Naive thymus-derived CD8-positive, alpha-beta T cell (primary cell): ENCODE measurements at regions of chr10 and their contacts with region 1.

Region 1: GRCh38 chr10:6348096-6348874 is 145.6 kb downstream of the PFKFB3 start:
- DNase-seq: peak; percentile 63 to 96 (median 87)
- ATAC-seq: peak; percentile 90 to 92
- H3K4me3 Mint-ChIP-seq: peak overlapping the region; percentile 68 to 87 (median 78)
- H3K27ac Mint-ChIP-seq: peak overlapping the region; percentile 79 to 99 (median 95)
- H3K4me1 Mint-ChIP-seq: peaks cover 39 to 80% (median 63%) of the 10 kb centered on the region in 4 donors
- H3K27me3 Mint-ChIP-seq: no peaks in the 10 kb centered on the region

Region 2: DNA sequence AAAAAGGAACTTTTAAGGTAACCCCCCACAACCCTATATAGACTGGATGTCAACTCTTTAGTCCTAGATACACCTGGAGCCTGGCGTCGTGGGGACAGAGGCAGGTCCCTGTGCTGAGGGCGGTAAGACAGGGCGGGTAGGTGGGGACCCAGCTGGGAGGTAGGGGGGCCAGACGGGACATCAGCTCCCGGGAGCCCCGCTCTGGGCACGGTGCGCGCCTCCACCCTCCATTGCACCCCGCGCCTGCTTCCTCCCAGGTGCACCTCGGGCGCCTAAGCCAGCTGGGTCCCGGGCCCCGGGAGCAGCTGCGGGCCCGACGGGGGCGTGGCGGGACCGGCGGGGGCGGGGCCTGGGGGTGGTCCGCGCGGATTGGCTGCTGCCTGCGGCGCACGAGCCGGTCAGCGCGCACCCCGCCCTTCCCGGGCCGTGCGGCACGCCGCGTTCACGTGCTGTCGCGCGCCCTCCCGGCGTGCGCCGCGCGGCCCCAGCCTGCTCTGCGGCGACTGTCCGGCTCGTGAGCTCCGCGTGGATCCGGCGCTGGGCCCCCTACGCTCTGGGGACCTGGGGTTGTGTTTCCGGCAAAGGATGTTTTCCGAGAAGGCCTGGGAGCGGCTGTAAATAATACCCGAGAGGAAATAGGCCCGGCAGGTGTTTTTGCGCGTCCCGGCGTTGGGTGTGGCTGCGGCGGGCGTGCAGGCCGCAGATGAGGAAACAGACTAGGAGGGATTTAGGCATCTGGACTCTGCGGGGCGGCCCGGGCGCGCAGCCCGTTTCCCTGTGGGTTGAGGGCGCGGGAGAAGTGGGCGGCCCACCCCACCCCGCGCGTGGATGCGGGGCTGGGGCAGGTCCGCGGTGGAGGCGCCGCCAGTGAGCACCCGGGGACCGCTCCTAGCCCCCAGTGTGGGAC is 184.7 kb before region 1 on chr10:
- POLR2A ChIA-PET with region 1: interaction called, 14 read pairs
- DNase-seq: peak; percentile 85 to 94 (median 92)
- ATAC-seq: peak; percentile 85 to 93
- H3K4me3 Mint-ChIP-seq: peak overlapping the region; percentile 87 to 94 (median 92)
- H3K27ac Mint-ChIP-seq: peak overlapping the region; percentile 93 to 99 (median 97)
- H3K4me1 Mint-ChIP-seq: peaks cover 30 to 56% (median 50%) of the 10 kb centered on the region in 4 donors
- H3K27me3 Mint-ChIP-seq: no peaks in the 10 kb centered on the region

Region 3: DNA sequence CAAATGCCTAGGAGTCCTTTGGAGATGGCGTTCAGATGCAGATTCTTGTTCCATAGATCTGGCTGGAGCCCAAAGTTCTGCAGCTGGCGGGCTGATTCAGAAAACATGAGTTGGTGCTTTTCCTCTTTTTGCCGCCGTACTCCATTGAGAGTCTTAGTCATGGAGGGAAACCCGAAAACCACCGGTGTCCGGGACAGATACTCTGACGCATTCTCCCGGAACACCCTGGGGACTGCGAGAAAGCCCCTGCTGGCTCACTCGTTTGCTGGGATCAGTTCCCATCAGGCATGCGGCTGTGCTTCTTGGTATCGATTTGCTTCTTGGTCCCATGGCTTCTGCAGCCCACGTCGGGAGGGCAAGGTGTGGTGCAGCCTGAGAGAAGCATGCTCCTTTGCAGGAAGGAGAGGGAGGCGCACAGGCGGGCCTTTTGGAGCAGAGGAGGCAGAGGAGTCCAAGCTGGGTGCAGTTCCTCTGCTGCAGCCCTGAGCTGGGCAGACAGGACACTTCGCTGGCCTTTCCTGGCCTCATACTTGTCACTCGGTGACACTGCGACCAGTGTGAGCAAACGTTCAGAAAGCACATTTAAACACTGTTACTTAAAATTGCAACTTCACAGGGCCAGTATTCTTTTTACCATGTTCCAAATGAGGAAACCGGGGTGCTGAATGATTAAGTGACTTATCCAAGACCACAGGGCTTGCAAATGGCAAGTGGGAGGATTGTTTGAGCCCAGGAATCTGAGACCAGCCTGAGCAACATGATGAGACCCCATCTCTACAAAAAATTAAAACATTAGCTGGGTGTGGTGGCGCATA is 176.2 kb before region 1 on chr10:
- POLR2A ChIA-PET with region 1: interaction called, 13 read pairs
- DNase-seq: no peak
- ATAC-seq: no peak
- H3K4me3 Mint-ChIP-seq: peak overlapping the region in 6 of 10 donors; percentile 20 to 78 (median 35)
- H3K27ac Mint-ChIP-seq: peak overlapping the region in 7 of 10 donors; percentile 48 to 94 (median 86)
- H3K4me1 Mint-ChIP-seq: peaks cover 45 to 93% (median 79%) of the 10 kb centered on the region in 4 donors
- H3K27me3 Mint-ChIP-seq: no peaks in the 10 kb centered on the region

Region 4: GRCh38 chr10:6275022-6275997 is 73.0 kb before region 1 on chr10:
- POLR2A ChIA-PET with region 1: interaction called, 13 read pairs
- DNase-seq: peak; percentile 33 to 88 (median 60)
- ATAC-seq: peak; percentile 80 to 92
- H3K4me3 Mint-ChIP-seq: peak overlapping the region; percentile 47 to 84 (median 66)
- H3K27ac Mint-ChIP-seq: peak overlapping the region; percentile 86 to 97 (median 91)
- H3K4me1 Mint-ChIP-seq: peaks cover 13 to 41% (median 27%) of the 10 kb centered on the region in 4 donors
- H3K27me3 Mint-ChIP-seq: no peaks in the 10 kb centered on the region

Region 5: DNA sequence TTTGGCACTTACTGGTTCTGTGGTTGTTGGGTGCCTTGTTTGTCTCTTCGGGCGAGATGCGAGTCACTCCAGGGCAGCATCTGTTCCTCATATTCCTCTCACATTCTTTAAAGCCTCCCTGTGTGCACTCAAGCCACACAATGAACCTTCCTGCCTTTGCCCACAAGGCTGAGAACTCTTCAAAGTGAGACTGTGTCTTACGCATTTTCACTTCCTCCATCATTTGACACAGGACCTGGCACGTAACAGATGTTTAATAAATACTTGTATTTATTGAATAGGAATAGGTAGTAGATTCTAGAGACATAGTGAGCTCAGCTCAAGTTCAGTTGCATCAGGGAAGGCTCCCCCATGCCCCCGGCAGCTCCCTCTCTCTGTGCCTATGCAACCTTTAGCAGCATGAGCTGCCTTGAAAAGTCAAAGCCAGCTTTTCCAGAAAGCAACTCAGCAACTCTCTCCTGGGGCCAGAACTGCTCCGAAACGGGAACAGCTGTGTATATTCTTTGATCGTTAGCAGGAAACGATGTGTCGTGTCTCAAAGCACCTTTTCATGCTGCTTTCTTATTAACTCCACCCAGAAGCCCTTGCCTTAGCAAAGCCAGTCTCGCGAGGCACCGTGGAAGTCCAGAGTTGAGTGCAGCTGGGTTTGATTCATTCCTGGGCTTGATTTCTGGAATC is 48.0 kb before region 1 on chr10:
- POLR2A ChIA-PET with region 1: interaction called, 24 read pairs
- DNase-seq: peak in 6 of 10 donors; percentile 14 to 61 (median 36)
- ATAC-seq: peak; percentile 83 to 88
- H3K4me3 Mint-ChIP-seq: peak overlapping the region in 8 of 10 donors; percentile 1 to 66 (median 27)
- H3K27ac Mint-ChIP-seq: peak overlapping the region; percentile 11 to 86 (median 58)
- H3K4me1 Mint-ChIP-seq: peaks cover 9 to 61% (median 22%) of the 10 kb centered on the region in 4 donors
- H3K27me3 Mint-ChIP-seq: no peaks in the 10 kb centered on the region

Region 6: GRCh38 chr10:6382081-6382480 is 33.8 kb after region 1 on chr10:
- POLR2A ChIA-PET with region 1: interaction called, 33 read pairs
- DNase-seq: peak in 8 of 10 donors; percentile 5 to 79 (median 44)
- ATAC-seq: peak; percentile 85 to 92
- H3K4me3 Mint-ChIP-seq: peak overlapping the region in 9 of 10 donors; percentile 64 to 88 (median 80)
- H3K27ac Mint-ChIP-seq: peak overlapping the region in 8 of 10 donors; percentile 2 to 97 (median 70)
- H3K4me1 Mint-ChIP-seq: peaks cover 14 to 27% (median 22%) of the 10 kb centered on the region in 4 donors
- H3K27me3 Mint-ChIP-seq: no peaks in the 10 kb centered on the region

Region 7: GRCh38 chr10:6401562-6402348 is 53.5 kb after region 1 on chr10:
- POLR2A ChIA-PET with region 1: interaction called, 30 read pairs
- DNase-seq: peak; percentile 13 to 76 (median 60)
- ATAC-seq: peak; percentile 91 to 93
- H3K4me3 Mint-ChIP-seq: peak overlapping the region in 7 of 10 donors; percentile 10 to 43 (median 37)
- H3K27ac Mint-ChIP-seq: peak overlapping the region in 9 of 10 donors; percentile 33 to 88 (median 68)
- H3K4me1 Mint-ChIP-seq: peaks cover 7 to 41% (median 11%) of the 10 kb centered on the region in 4 donors
- H3K27me3 Mint-ChIP-seq: peaks cover 0 to 4% (median 0%) of the 10 kb centered on the region in 5 donors

Region 8: GRCh38 chr10:6458814-6459213 is 110.5 kb after region 1 on chr10:
- POLR2A ChIA-PET with region 1: no interaction called
- DNase-seq: peak in 1 of 10 donors; percentile 31
- ATAC-seq: peak in 1 of 2 donors; percentile 57
- H3K4me3 Mint-ChIP-seq: peak overlapping the region in 1 of 10 donors; percentile 36
- H3K27ac Mint-ChIP-seq: peak overlapping the region in 7 of 10 donors; percentile 33 to 75 (median 68)
- H3K4me1 Mint-ChIP-seq: peaks cover 5 to 30% (median 26%) of the 10 kb centered on the region in 4 donors
- H3K27me3 Mint-ChIP-seq: no peaks in the 10 kb centered on the region